ENCODE measurements at regions of chr17 and their contacts with region 1.

Region 1: DNA sequence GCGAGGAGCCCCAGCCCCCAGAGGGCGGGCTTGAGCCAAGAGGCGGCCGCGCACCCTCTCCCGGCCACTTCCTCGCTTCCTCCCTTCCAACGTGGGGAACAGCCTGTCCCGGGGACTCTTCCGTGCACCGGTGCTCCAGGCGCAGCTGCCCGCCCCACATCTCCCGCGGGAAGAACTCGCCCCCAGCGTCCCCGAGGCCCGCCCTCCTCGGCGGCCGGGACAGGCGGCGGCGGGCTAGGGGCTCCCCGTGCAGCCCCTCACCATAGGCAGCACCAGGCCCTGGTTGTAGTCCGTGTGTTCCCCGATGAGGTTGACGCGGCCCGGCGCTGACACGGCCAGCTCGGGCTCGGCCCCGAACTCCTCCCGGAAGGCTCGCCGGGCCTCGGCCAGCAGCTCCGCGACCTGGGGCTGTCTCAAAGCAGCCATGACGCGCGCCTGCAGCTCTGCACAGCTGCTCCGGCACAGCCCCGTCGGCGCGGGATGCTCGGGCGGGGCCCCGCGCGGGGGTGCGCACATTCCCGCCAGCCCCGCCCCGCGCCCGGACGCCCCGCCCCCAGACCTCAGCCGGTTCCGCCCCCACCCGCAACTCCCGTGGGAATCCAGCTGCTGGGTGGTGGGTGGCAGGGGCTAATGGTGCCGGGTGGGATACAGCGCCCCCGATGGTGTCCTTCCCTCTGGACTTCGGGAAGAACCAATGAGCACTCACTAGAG is at the start of gene GALK1:
- DNase-seq: peak; percentile 90
- ATAC-seq: peak; percentile 95
- H3K4me3 Mint-ChIP-seq: peak within 1 kb of the TSS; percentile 80
- H3K27ac Mint-ChIP-seq: peak within 1 kb of the TSS; percentile 83
- H3K4me1 Mint-ChIP-seq: peaks cover 3% of the 10 kb centered on the region
- H3K27me3 Mint-ChIP-seq: no peaks in the 10 kb centered on the region
- total RNA-seq, gene GALK1: 50.3 to 63.2 TPM

Region 2: GRCh38 chr17:75524953-75525719 is 239.7 kb before region 1 on chr17 and contains the start of gene LLGL2:
- CTCF ChIA-PET with region 1: no interaction called
- POLR2A ChIA-PET with region 1: no interaction called
- intact Hi-C with region 1: no loop called
- DNase-seq: peak; percentile 88
- ATAC-seq: peak; percentile 89
- H3K4me3 Mint-ChIP-seq: peak within 1 kb of the TSS; percentile 62
- H3K27ac Mint-ChIP-seq: no peak within 1 kb of the TSS
- H3K4me1 Mint-ChIP-seq: peaks cover 10% of the 10 kb centered on the region
- H3K27me3 Mint-ChIP-seq: no peaks in the 10 kb centered on the region
- total RNA-seq, gene LLGL2: 7.1 to 9.6 TPM

Region 3: GRCh38 chr17:75779231-75779986 is 14.5 kb after region 1 on chr17:
- CTCF ChIA-PET with region 1: interaction called, 14 read pairs
- POLR2A ChIA-PET with region 1: interaction called, 79 read pairs
- intact Hi-C with region 1: loop called in 1 of 2 experiments (anchors 1 kb)
- DNase-seq: peak; percentile 96
- ATAC-seq: peak; percentile 69
- H3K4me3 Mint-ChIP-seq: peak overlapping the region; percentile 98
- H3K27ac Mint-ChIP-seq: peak overlapping the region; percentile 99
- H3K4me1 Mint-ChIP-seq: peaks cover 46% of the 10 kb centered on the region
- H3K27me3 Mint-ChIP-seq: peaks cover 1% of the 10 kb centered on the region

Region 4: DNA sequence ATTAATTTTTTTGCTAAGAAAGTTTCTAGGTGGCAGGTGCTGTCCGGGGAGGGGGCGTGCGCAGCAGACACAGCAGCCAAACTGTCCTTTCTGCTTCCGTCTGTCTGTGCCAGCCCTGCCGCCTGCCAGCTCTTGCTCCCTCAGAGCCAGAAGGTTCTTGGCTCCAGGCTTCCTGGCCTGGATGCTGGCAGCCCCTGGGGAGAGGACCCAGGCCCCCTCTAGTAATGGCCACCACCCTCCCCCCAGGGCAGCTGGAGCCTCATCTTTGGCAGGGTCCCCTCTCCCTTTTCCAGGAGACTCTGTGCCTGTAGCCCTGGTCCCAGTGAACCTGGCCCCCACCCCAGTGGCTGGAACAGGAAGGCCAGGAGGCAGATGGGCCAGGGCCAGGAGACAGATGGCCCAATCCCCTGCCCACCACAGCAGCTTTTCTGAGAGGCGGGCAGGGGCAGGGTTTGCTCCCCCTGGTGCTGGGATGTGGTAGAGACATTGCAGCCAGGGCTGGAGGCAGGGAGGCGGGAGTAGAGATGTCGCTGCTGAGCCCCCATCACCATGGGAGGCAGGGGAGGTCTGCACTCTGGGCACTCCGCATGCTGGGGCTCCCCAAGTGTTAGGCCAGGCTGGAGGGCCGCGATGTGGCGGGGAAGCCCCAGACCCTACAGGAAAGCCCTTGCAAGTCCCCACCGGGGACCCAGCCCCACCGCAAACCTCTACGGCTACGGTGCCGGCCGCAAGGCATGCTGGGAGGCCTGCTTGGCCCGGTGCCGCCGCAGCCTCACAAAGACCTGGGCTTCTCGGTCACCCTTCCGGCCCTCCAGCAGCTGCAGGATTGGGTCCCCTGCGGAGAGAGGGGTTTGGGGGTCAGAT is 62.6 kb after region 1 on chr17:
- CTCF ChIA-PET with region 1: interaction called, 22 read pairs
- POLR2A ChIA-PET with region 1: interaction called, 3 read pairs
- intact Hi-C with region 1: loop called (anchors 1 kb)
- DNase-seq: peak; percentile 85
- ATAC-seq: peak; percentile 75
- H3K4me3 Mint-ChIP-seq: peak overlapping the region; percentile 53
- H3K27ac Mint-ChIP-seq: peak overlapping the region; percentile 87
- H3K4me1 Mint-ChIP-seq: peaks cover 14% of the 10 kb centered on the region
- H3K27me3 Mint-ChIP-seq: no peaks in the 10 kb centered on the region

Region 5: GRCh38 chr17:75837871-75838270 is 73.0 kb after region 1 on chr17:
- CTCF ChIA-PET with region 1: no interaction called
- POLR2A ChIA-PET with region 1: no interaction called
- intact Hi-C with region 1: no loop called
- DNase-seq: no peak
- ATAC-seq: no peak
- H3K4me3 Mint-ChIP-seq: no peak overlapping the region
- H3K27ac Mint-ChIP-seq: peak overlapping the region; percentile 37
- H3K4me1 Mint-ChIP-seq: peaks cover 25% of the 10 kb centered on the region
- H3K27me3 Mint-ChIP-seq: no peaks in the 10 kb centered on the region

Region 6: GRCh38 chr17:75896415-75897159 is 131.7 kb after region 1 on chr17 and contains the start of gene TRIM65:
- CTCF ChIA-PET with region 1: no interaction called
- POLR2A ChIA-PET with region 1: no interaction called
- intact Hi-C with region 1: loop called in 1 of 2 experiments (anchors 1 kb)
- DNase-seq: peak; percentile 86
- ATAC-seq: peak; percentile 85
- H3K4me3 Mint-ChIP-seq: peak within 1 kb of the TSS; percentile 84
- H3K27ac Mint-ChIP-seq: peak within 1 kb of the TSS; percentile 72
- H3K4me1 Mint-ChIP-seq: peaks cover 19% of the 10 kb centered on the region
- H3K27me3 Mint-ChIP-seq: no peaks in the 10 kb centered on the region
- total RNA-seq, gene TRIM65: 28.9 to 31.9 TPM

Region 7: DNA sequence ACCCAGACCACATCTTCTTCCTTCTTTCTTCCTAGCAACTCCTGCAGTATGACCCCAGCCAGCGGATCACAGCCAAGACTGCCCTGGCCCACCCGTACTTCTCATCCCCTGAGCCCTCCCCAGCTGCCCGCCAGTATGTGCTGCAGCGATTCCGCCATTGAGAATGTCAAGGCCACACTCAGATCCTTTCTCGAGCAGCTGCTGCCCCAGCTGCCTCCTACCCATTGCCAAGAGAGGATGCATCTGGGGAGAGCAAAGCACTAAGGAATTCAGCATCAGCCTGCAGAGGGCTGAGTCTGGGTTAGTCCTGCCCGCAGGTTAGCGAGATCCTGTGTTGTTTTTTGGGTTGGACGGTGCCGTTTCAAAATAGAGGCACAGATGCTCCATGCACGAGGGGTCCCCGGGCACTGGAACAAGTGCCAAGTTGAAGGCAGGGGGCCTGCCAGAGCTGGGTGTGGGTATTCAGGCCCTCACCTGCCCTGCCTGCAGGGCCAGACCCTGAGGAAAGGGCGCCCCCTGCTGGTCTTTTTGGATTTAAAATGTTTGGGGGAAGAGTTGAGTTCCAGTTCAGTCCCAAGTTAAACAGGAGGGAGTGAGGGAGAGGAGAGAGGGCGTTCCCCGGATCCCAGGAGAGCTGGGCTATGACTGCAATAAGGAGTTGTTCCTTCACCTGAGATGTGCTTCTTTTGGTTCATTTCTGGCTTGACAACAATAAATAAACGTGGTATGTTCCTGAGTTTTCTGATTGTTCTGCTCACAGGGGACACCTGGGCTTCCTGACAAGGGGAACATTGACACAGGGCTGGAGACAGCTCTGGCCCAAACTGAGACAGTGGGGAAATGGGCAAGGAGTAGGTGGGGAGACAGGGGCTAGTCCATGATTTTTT is 240.6 kb after region 1 on chr17:
- CTCF ChIA-PET with region 1: no interaction called
- POLR2A ChIA-PET with region 1: no interaction called
- intact Hi-C with region 1: loop called in 1 of 2 experiments (anchors 5 kb)
- DNase-seq: peak; percentile 92
- ATAC-seq: peak; percentile 77
- H3K4me3 Mint-ChIP-seq: no peak overlapping the region
- H3K27ac Mint-ChIP-seq: no peak overlapping the region
- H3K4me1 Mint-ChIP-seq: no peaks in the 10 kb centered on the region
- H3K27me3 Mint-ChIP-seq: no peaks in the 10 kb centered on the region